ENCODE measurements at regions of chr1 and their contacts with region 1.

Region 1: DNA sequence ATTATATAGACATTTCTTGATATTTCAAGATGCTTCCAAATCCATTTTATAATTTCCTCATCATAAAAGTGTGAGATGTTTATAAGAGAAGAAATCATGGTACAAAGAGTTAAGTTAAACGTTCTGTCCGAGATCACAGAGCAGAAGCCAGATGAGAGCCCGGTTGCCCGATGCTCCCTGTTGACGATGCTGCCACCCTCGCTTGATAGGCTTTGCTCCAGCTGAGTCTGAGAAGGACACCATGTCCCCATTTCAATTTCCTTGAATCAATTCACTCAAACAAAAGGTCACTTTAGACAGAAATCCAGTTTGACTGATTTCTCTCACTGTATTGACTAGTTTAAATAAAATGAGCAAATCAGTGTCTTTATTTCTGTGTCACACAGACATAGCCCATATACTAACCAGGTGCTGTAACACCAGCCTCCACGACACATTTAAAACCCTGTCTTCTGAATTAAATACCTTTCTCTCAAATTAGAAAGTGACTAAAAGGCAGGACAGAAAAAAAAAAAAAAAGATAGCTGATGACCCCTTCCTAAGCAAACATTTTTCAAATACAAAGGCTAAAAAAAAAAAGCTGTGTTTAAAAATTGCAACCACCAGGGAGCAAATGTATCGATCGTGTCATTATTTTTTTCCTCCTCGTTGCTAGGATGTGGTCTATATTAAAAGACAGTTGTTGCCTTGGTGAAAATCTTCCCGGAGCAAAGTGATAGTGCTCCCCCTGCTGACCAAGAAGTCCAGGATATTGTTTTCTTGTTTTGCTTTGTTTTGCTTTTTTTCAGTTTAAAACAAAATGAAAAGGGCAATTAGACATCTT is 35.2 kb downstream of the DNASE2B start:
- DNase-seq: peak; percentile 81
- H3K4me3 ChIP-seq: peak overlapping the region; percentile 9
- H3K27ac ChIP-seq: peak overlapping the region; percentile 39
- H3K4me1 ChIP-seq: no peaks in the 10 kb centered on the region
- H3K27me3 ChIP-seq: no peaks in the 10 kb centered on the region
- CTCF ChIP-seq: peak; percentile 69

Region 2: DNA sequence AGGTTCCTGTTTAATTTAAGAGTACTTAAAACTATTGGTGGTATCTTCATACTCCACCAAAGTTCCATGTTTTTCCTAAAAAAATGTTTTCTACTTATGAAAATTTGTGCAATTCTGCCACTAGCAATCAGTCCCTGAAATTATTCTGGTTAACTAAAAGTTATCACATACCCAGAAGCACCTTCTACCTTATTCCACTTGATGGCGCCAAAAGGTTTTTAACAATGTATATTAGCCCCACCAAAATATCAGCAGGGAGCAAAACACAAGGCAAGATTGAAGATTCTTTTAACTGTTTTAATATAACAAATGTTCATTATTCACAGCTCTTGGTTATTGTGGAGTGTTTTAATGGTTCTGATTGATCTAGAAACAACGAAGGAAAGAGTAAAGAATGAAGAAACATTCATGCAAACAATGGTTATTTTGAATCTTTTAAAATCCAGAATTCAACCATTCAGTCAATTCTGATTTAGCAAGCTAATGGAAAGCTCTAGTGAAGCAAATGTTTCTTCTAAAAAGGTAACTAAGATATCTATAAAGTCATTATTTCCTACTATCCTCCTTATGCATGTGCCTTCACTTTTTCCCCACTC is 501.7 kb before region 1 on chr1:
- intact Hi-C with region 1: loop called (anchors 10 kb)
- DNase-seq: peak; percentile 33
- H3K4me3 ChIP-seq: no peak overlapping the region
- H3K27ac ChIP-seq: no peak overlapping the region
- H3K4me1 ChIP-seq: no peaks in the 10 kb centered on the region
- H3K27me3 ChIP-seq: no peaks in the 10 kb centered on the region
- CTCF ChIP-seq: peak; percentile 57

Region 3: GRCh38 chr1:84143796-84144565 is 289.5 kb before region 1 on chr1 and contains the start of gene PRKACB:
- intact Hi-C with region 1: loop called (anchors 2 kb)
- DNase-seq: no peak
- H3K4me3 ChIP-seq: peak within 1 kb of the TSS; percentile 25
- H3K27ac ChIP-seq: peak within 1 kb of the TSS; percentile 70
- H3K4me1 ChIP-seq: no peaks in the 10 kb centered on the region
- H3K27me3 ChIP-seq: no peaks in the 10 kb centered on the region
- CTCF ChIP-seq: no peak
- total RNA-seq, gene PRKACB: 85.2 to 149 TPM

Region 4: GRCh38 chr1:84307398-84307797 is 126.1 kb before region 1 on chr1:
- intact Hi-C with region 1: loop called (anchors 5 kb)
- DNase-seq: no peak
- H3K4me3 ChIP-seq: no peak overlapping the region
- H3K27ac ChIP-seq: no peak overlapping the region
- H3K4me1 ChIP-seq: no peaks in the 10 kb centered on the region
- H3K27me3 ChIP-seq: no peaks in the 10 kb centered on the region
- CTCF ChIP-seq: no peak

Region 5: DNA sequence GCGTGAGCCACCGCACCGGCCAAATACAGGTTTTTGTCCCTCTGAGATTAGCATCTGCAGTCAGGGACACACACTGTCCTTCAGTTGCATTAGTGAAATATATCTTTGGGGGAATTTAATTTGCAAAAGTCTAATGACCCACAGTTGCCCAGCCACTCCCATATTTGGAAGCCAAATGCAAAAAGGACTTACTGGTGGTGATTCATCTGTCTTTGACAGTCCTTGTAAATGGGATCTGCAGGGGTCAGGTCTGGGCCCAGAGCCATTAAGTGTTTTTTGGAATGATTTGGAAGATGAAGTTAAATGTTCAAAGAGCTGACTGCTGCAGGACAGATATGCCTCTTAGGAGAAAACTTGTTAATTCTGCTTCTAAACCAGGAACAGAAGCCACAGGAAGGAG is 79.8 kb before region 1 on chr1:
- intact Hi-C with region 1: no loop called
- DNase-seq: no peak
- H3K4me3 ChIP-seq: no peak overlapping the region
- H3K27ac ChIP-seq: no peak overlapping the region
- H3K4me1 ChIP-seq: peaks cover 8% of the 10 kb centered on the region
- H3K27me3 ChIP-seq: no peaks in the 10 kb centered on the region
- CTCF ChIP-seq: no peak

Region 6: GRCh38 chr1:84620720-84621313 is 187.3 kb after region 1 on chr1:
- intact Hi-C with region 1: loop called (anchors 5 kb)
- DNase-seq: peak; percentile 76
- H3K4me3 ChIP-seq: peak overlapping the region; percentile 50
- H3K27ac ChIP-seq: peak overlapping the region; percentile 7
- H3K4me1 ChIP-seq: no peaks in the 10 kb centered on the region
- H3K27me3 ChIP-seq: no peaks in the 10 kb centered on the region
- CTCF ChIP-seq: peak; percentile 97

Measured in colonic mucosa (tissue), 4 donors.